ENCODE measurements at regions of chr14 and their contacts with region 1.

Region 1: GRCh38 chr14:106556665-106557289 is 1030.4 kb downstream of the TMEM121 start:
- DNase-seq: peak; percentile 88
- ATAC-seq: peak; percentile 77
- H3K4me3 Mint-ChIP-seq: no peak overlapping the region
- H3K27ac Mint-ChIP-seq: no peak overlapping the region
- H3K4me1 Mint-ChIP-seq: no peaks in the 10 kb centered on the region
- H3K27me3 Mint-ChIP-seq: peaks cover 2% of the 10 kb centered on the region
- CTCF ChIP-seq: peak; percentile 94

Region 2: DNA sequence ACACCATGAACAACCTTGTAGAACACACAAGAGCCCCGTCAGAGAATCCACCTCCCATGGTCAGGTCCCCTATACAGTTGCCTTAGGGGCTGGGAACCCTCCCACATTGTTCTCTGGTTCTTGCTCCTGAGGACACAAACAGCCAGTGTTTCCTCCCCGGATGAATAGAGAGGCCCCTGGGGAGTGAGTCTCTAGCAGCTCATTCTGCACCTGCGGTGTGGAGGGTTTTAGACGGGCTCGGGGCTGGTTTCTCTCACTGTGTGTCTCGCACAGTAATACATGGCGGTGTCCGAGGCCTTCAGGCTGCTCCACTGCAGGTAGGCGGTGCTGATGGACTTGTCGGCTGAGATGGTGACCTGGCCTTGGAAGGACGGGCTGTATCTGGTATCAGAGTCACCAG is 21.7 kb after region 1 on chr14:
- CTCF ChIA-PET with region 1: interaction called, 13 read pairs
- POLR2A ChIA-PET with region 1: no interaction called
- intact Hi-C with region 1: no loop called
- DNase-seq: no peak
- ATAC-seq: no peak
- H3K4me3 Mint-ChIP-seq: no peak overlapping the region
- H3K27ac Mint-ChIP-seq: no peak overlapping the region
- H3K4me1 Mint-ChIP-seq: no peaks in the 10 kb centered on the region
- H3K27me3 Mint-ChIP-seq: peaks cover 4% of the 10 kb centered on the region
- CTCF ChIP-seq: no peak

Region 3: GRCh38 chr14:106586098-106586704 is 29.4 kb after region 1 on chr14:
- CTCF ChIA-PET with region 1: interaction called, 13 read pairs
- POLR2A ChIA-PET with region 1: no interaction called
- intact Hi-C with region 1: no loop called
- DNase-seq: peak; percentile 85
- ATAC-seq: peak; percentile 100
- H3K4me3 Mint-ChIP-seq: no peak overlapping the region
- H3K27ac Mint-ChIP-seq: no peak overlapping the region
- H3K4me1 Mint-ChIP-seq: peaks cover 4% of the 10 kb centered on the region
- H3K27me3 Mint-ChIP-seq: no peaks in the 10 kb centered on the region
- CTCF ChIP-seq: peak; percentile 91

Region 4: DNA sequence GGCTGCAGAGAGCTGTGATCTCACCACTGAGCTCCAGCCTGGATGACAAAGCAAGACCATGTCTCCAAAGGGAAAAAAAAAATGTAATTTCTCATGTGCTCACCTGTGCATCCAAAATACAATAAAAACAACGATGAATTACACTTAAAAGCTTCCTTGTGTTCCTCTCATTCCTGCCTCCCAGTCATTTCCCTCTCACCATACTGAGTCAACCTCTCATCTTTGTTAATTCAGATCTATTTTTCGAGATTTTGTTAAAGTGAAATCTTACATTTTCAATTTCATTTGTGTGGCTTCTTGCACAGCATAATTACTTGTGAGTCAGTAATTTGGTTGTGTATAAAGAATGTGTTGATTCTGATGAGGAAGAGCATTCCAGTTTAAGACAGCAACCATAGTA is 172.8 kb after region 1 on chr14:
- CTCF ChIA-PET with region 1: no interaction called
- POLR2A ChIA-PET with region 1: no interaction called
- intact Hi-C with region 1: no loop called
- DNase-seq: no peak
- ATAC-seq: no peak
- H3K4me3 Mint-ChIP-seq: no peak overlapping the region
- H3K27ac Mint-ChIP-seq: no peak overlapping the region
- H3K4me1 Mint-ChIP-seq: peaks cover 14% of the 10 kb centered on the region
- H3K27me3 Mint-ChIP-seq: peaks cover 1% of the 10 kb centered on the region
- CTCF ChIP-seq: no peak